ENCODE measurements at regions of chr5 and their contacts with region 1.

Region 1: GRCh38 chr5:9207817-9208418 is 338.0 kb downstream of the SEMA5A start:
- DNase-seq: no peak
- ATAC-seq: no peak
- H3K4me3 Mint-ChIP-seq: no peak overlapping the region
- H3K27ac Mint-ChIP-seq: no peak overlapping the region
- H3K4me1 Mint-ChIP-seq: no peaks in the 10 kb centered on the region
- H3K27me3 Mint-ChIP-seq: no peaks in the 10 kb centered on the region

Region 2: GRCh38 chr5:8756498-8757084 is 451.3 kb before region 1 on chr5:
- CTCF ChIA-PET with region 1: no interaction called
- POLR2A ChIA-PET with region 1: no interaction called
- intact Hi-C with region 1: loop called in 1 of 2 experiments (anchors 2 kb)
- DNase-seq: peak; percentile 9
- ATAC-seq: no peak
- H3K4me3 Mint-ChIP-seq: no peak overlapping the region
- H3K27ac Mint-ChIP-seq: no peak overlapping the region
- H3K4me1 Mint-ChIP-seq: no peaks in the 10 kb centered on the region
- H3K27me3 Mint-ChIP-seq: no peaks in the 10 kb centered on the region

Region 3: GRCh38 chr5:8864053-8864452 is 343.9 kb before region 1 on chr5:
- CTCF ChIA-PET with region 1: no interaction called
- POLR2A ChIA-PET with region 1: no interaction called
- intact Hi-C with region 1: loop called in 1 of 2 experiments (anchors 10 kb)
- DNase-seq: peak; percentile 12
- ATAC-seq: no peak
- H3K4me3 Mint-ChIP-seq: no peak overlapping the region
- H3K27ac Mint-ChIP-seq: no peak overlapping the region
- H3K4me1 Mint-ChIP-seq: no peaks in the 10 kb centered on the region
- H3K27me3 Mint-ChIP-seq: no peaks in the 10 kb centered on the region

Region 4: DNA sequence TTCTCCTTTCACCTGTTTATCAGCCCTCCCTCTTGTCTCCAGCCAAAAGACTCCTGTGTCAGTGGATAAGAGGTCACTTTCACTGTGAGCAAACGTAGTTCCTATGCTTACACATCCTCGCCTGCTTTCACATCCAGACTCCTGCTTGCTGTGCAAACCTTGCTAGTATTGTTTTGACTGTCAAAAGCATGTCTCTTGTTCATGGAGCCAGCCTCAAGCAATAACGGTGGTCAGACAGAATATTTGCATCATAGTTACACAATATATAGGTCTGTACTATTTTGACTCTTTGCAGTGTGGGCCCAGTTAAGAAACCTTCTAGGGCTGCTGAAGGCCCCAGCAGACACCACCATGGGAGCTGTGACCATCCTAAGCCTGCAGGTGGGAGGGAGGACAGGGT is 82.1 kb before region 1 on chr5:
- CTCF ChIA-PET with region 1: no interaction called
- POLR2A ChIA-PET with region 1: no interaction called
- intact Hi-C with region 1: no loop called
- DNase-seq: no peak
- ATAC-seq: no peak
- H3K4me3 Mint-ChIP-seq: no peak overlapping the region
- H3K27ac Mint-ChIP-seq: no peak overlapping the region
- H3K4me1 Mint-ChIP-seq: no peaks in the 10 kb centered on the region
- H3K27me3 Mint-ChIP-seq: no peaks in the 10 kb centered on the region

Region 5: GRCh38 chr5:10310066-10310779 is 1102.3 kb after region 1 on chr5:
- CTCF ChIA-PET with region 1: no interaction called
- POLR2A ChIA-PET with region 1: no interaction called
- intact Hi-C with region 1: no loop called
- DNase-seq: no peak
- ATAC-seq: no peak
- H3K4me3 Mint-ChIP-seq: no peak overlapping the region
- H3K27ac Mint-ChIP-seq: no peak overlapping the region
- H3K4me1 Mint-ChIP-seq: peaks cover 18% of the 10 kb centered on the region
- H3K27me3 Mint-ChIP-seq: peaks cover 24% of the 10 kb centered on the region